MCF 10A (cell line): ENCODE measurements at regions of chr16 and their contacts with region 1.

Region 1: DNA sequence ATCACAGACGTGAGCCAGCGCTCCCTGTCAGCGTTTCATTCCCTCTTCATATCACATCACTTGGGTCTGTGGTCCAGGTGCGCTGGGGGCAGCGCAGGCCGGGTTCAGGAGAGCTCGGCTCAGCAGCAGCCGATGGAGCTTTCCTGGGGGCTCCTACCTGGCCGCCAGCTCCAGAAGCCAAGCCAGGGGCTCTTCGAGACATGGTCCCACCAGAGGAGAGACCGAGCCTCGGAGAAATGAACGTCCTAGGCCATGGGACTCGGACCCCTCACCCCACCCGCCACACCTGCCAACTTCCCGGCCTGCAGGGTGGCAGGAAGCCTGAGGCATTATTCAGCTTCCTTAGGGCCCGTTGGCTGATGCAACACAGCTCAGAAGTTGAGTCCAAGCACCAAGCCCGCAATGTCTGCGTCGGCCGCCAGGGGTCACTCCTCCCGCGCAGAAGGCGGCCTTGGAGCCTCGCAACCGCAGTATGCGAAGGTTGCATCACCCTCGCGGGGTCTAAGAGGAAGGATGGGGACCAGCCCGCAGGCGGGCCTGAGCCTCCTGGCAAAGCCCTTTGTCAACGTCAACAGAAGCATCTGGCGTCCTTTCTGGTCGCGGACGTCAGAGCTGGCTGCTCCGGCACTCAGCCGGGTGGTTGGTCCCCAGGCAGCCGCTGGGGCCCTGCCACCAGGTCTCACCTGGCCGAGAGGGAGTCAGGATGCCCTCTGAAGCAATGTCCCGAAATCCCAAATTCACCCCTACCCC is 13.2 kb upstream of the KLHDC4 start:
- DNase-seq: peak; percentile 97
- H3K4me3 Mint-ChIP-seq: peak overlapping the region; percentile 52
- H3K27ac Mint-ChIP-seq: peak overlapping the region; percentile 89
- H3K4me1 Mint-ChIP-seq: peaks cover 18% of the 10 kb centered on the region
- H3K27me3 Mint-ChIP-seq: no peaks in the 10 kb centered on the region
- CTCF ChIP-seq: peak; percentile 98

Region 2: GRCh38 chr16:87684106-87684677 is 94.8 kb before region 1 on chr16:
- CTCF ChIA-PET with region 1: no interaction called
- POLR2A ChIA-PET with region 1: no interaction called
- intact Hi-C with region 1: no loop called
- DNase-seq: no peak
- H3K4me3 Mint-ChIP-seq: no peak overlapping the region
- H3K27ac Mint-ChIP-seq: no peak overlapping the region
- H3K4me1 Mint-ChIP-seq: no peaks in the 10 kb centered on the region
- H3K27me3 Mint-ChIP-seq: peaks cover 23% of the 10 kb centered on the region
- CTCF ChIP-seq: no peak

Region 3: GRCh38 chr16:87736008-87736382 is 43.0 kb before region 1 on chr16:
- CTCF ChIA-PET with region 1: no interaction called
- POLR2A ChIA-PET with region 1: no interaction called
- intact Hi-C with region 1: no loop called
- DNase-seq: no peak
- H3K4me3 Mint-ChIP-seq: no peak overlapping the region
- H3K27ac Mint-ChIP-seq: no peak overlapping the region
- H3K4me1 Mint-ChIP-seq: peaks cover 6% of the 10 kb centered on the region
- H3K27me3 Mint-ChIP-seq: no peaks in the 10 kb centered on the region
- CTCF ChIP-seq: no peak

Region 4: DNA sequence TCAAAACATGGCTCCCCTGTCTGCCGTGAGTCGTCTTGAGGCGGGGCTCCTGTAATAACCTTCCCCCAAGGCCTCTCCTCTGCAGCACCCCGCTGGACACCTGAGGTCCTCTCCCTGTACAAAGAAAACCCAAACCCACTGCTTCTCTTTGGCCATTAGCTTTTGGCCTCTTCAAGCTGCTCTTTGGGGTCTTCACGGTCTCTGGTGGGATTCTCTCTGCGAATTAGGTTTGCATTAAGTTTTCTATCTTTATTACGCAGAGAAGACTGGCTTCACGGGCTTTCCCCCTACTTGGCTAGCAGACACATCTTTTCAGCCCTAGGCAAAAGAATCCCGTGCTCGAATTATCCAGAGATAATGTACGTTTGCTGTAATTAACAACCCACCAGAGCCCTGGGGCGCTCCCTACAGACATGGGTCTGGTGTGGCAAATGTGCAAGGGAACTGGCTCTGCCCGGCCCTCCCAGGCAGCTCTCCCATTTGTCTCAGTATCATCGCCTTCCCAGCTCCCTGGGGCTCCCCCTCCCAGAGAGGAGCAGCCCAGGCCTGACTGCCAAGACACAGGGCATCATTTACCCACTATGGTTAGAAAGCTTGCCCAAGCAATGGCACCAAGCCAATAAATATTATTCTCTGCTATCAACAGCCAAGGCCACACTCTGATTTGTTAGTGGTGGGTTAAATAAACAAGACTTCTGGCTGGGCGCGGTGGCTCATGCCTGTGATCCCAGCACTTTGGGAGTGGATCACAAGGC is 11.4 kb after region 1 on chr16:
- CTCF ChIA-PET with region 1: interaction called, 62 read pairs
- POLR2A ChIA-PET with region 1: interaction called, 86 read pairs
- intact Hi-C with region 1: no loop called
- DNase-seq: peak; percentile 98
- H3K4me3 Mint-ChIP-seq: peak overlapping the region; percentile 17
- H3K27ac Mint-ChIP-seq: peak overlapping the region; percentile 93
- H3K4me1 Mint-ChIP-seq: peaks cover 25% of the 10 kb centered on the region
- H3K27me3 Mint-ChIP-seq: no peaks in the 10 kb centered on the region
- CTCF ChIP-seq: no peak

Region 5: GRCh38 chr16:87822108-87822970 is 43.3 kb after region 1 on chr16:
- CTCF ChIA-PET with region 1: interaction called, 16 read pairs
- POLR2A ChIA-PET with region 1: interaction called, 15 read pairs
- intact Hi-C with region 1: loop called (anchors 5 kb)
- DNase-seq: no peak
- H3K4me3 Mint-ChIP-seq: no peak overlapping the region
- H3K27ac Mint-ChIP-seq: peak overlapping the region; percentile 35
- H3K4me1 Mint-ChIP-seq: peaks cover 13% of the 10 kb centered on the region
- H3K27me3 Mint-ChIP-seq: no peaks in the 10 kb centered on the region
- CTCF ChIP-seq: no peak

Region 6: GRCh38 chr16:87834623-87835407 is 55.8 kb after region 1 on chr16:
- CTCF ChIA-PET with region 1: interaction called, 23 read pairs
- POLR2A ChIA-PET with region 1: interaction called, 8 read pairs
- intact Hi-C with region 1: no loop called
- DNase-seq: peak; percentile 50
- H3K4me3 Mint-ChIP-seq: no peak overlapping the region
- H3K27ac Mint-ChIP-seq: no peak overlapping the region
- H3K4me1 Mint-ChIP-seq: no peaks in the 10 kb centered on the region
- H3K27me3 Mint-ChIP-seq: no peaks in the 10 kb centered on the region
- CTCF ChIP-seq: no peak

Region 7: GRCh38 chr16:87853411-87854052 is 74.5 kb after region 1 on chr16:
- CTCF ChIA-PET with region 1: interaction called, 23 read pairs
- POLR2A ChIA-PET with region 1: interaction called, 11 read pairs
- intact Hi-C with region 1: loop called (anchors 5 kb)
- DNase-seq: peak; percentile 96
- H3K4me3 Mint-ChIP-seq: peak overlapping the region; percentile 52
- H3K27ac Mint-ChIP-seq: peak overlapping the region; percentile 83
- H3K4me1 Mint-ChIP-seq: peaks cover 36% of the 10 kb centered on the region
- H3K27me3 Mint-ChIP-seq: no peaks in the 10 kb centered on the region
- CTCF ChIP-seq: no peak

Region 8: GRCh38 chr16:87877938-87878507 is 99.0 kb after region 1 on chr16:
- CTCF ChIA-PET with region 1: interaction called, 205 read pairs
- POLR2A ChIA-PET with region 1: no interaction called
- intact Hi-C with region 1: no loop called
- DNase-seq: no peak
- H3K4me3 Mint-ChIP-seq: no peak overlapping the region
- H3K27ac Mint-ChIP-seq: no peak overlapping the region
- H3K4me1 Mint-ChIP-seq: no peaks in the 10 kb centered on the region
- H3K27me3 Mint-ChIP-seq: peaks cover 31% of the 10 kb centered on the region
- CTCF ChIP-seq: no peak

Region 9: GRCh38 chr16:88315543-88316105 is 536.6 kb after region 1 on chr16:
- CTCF ChIA-PET with region 1: no interaction called
- POLR2A ChIA-PET with region 1: no interaction called
- intact Hi-C with region 1: no loop called
- DNase-seq: peak; percentile 69
- H3K4me3 Mint-ChIP-seq: no peak overlapping the region
- H3K27ac Mint-ChIP-seq: no peak overlapping the region
- H3K4me1 Mint-ChIP-seq: no peaks in the 10 kb centered on the region
- H3K27me3 Mint-ChIP-seq: no peaks in the 10 kb centered on the region
- CTCF ChIP-seq: no peak